Common myeloid progenitor, CD34-positive (primary cell): ENCODE measurements at regions of chr7 and their contacts with region 1.

Region 1: GRCh38 chr7:97117372-97118188 is at the start of gene SDHAF3:
- DNase-seq: peak; percentile 99 to 100 (median 100)
- H3K4me3 ChIP-seq: peak within 1 kb of the TSS; percentile 72 to 97 (median 82)
- H3K27ac ChIP-seq: peak within 1 kb of the TSS; percentile 27 to 83
- H3K4me1 ChIP-seq: peaks cover 14 to 38% (median 23%) of the 10 kb centered on the region in 4 experiments
- H3K27me3 ChIP-seq: no peaks in the 10 kb centered on the region

Region 2: GRCh38 chr7:97104719-97105238 is 12.8 kb before region 1 on chr7:
- CTCF ChIA-PET with region 1: interaction called, 16 read pairs
- POLR2A ChIA-PET with region 1: interaction called, 3 read pairs
- DNase-seq: peak; percentile 77 to 86 (median 82)
- H3K4me3 ChIP-seq: no peak overlapping the region
- H3K27ac ChIP-seq: no peak overlapping the region
- H3K4me1 ChIP-seq: no peaks in the 10 kb centered on the region
- H3K27me3 ChIP-seq: no peaks in the 10 kb centered on the region